Dendritic cell treated with granulocyte-macrophage colony-stimulating factor and Interleukin-4, amounts not matched to agents 40 ng/mL and 50 ng/mL, for 4 days (primary cell): ENCODE measurements at regions of chr11 and their contacts with region 1.

Region 1: DNA sequence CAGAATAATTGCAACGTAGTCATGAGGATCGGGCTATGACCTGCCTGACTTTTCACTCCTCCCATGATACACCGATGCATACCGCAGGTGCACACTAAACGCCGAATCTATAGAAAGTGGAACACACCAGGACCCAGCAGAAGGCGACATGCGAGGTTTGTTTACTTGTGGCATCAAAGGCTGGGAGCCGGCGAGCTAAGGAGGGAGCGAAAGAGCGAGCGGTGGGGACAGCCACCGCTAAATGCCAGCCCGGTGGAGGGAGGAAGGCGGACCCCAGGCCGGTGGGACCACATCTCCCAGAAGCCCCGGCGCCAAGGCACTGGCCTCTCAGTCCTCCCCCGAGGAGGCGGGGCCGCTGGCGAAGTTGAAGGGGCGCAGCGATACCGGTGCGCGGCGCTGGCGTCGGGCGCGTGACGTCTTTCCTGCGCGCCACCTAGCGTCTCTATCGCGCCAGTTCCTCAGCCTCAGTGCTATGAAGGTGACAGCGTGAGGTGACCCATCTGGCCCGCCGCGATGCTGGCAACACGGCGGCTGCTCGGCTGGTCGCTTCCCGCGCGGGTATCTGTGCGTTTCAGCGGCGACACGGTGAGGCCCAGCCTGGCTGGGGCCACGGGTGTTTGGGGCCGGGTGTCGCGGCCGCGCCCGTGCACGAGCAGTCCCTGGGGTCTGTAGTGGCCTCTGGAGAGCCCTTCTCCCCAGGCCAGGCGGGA is at the start of gene NDUFV1:
- H3K4me3 Mint-ChIP-seq: peak within 1 kb of the TSS; percentile 94
- H3K27ac Mint-ChIP-seq: peak within 1 kb of the TSS; percentile 87
- H3K4me1 Mint-ChIP-seq: peaks cover 30% of the 10 kb centered on the region
- H3K27me3 Mint-ChIP-seq: peaks cover 21% of the 10 kb centered on the region

Region 2: GRCh38 chr11:67136156-67136555 is 470.5 kb before region 1 on chr11:
- intact Hi-C with region 1: no loop called
- H3K4me3 Mint-ChIP-seq: no peak overlapping the region
- H3K27ac Mint-ChIP-seq: no peak overlapping the region
- H3K4me1 Mint-ChIP-seq: peaks cover 14% of the 10 kb centered on the region
- H3K27me3 Mint-ChIP-seq: no peaks in the 10 kb centered on the region

Region 3: DNA sequence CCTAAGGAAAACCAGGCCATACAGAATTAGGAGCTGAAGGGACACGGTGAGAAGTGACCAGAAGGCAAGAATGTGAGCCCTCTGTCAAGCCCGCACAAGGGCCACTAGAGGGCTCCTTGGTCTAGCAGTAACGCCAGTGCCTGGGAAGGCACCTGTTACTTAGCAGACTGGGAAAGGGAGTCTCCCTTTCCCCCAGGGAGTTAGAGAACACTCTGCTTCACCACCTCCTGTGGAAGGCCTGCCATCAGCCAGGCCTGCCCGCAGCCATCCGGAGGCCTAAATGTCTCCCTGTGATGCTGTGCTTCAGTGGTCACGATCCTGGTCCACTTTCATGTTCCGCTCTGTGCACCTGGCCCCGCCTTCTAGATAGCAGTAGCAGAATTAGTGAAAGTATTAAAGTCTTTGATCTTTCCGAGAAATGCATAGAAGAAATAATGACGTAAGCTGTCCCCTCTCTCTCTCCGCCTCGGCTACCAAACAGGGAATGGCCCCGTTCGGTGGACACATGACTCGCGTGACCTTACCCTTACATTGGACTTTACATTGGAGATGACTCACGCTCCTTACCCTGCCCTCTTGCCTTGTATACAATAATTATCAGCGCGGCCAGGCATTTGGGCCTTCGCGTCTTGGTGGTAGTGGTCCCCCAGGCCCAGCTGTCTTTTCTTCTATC is 33.8 kb before region 1 on chr11:
- intact Hi-C with region 1: loop called (anchors 5 kb)
- H3K4me3 Mint-ChIP-seq: peak overlapping the region; percentile 23
- H3K27ac Mint-ChIP-seq: no peak overlapping the region
- H3K4me1 Mint-ChIP-seq: peaks cover 7% of the 10 kb centered on the region
- H3K27me3 Mint-ChIP-seq: peaks cover 44% of the 10 kb centered on the region